ENCODE measurements at regions of chr15 and their contacts with region 1.

Region 1: DNA sequence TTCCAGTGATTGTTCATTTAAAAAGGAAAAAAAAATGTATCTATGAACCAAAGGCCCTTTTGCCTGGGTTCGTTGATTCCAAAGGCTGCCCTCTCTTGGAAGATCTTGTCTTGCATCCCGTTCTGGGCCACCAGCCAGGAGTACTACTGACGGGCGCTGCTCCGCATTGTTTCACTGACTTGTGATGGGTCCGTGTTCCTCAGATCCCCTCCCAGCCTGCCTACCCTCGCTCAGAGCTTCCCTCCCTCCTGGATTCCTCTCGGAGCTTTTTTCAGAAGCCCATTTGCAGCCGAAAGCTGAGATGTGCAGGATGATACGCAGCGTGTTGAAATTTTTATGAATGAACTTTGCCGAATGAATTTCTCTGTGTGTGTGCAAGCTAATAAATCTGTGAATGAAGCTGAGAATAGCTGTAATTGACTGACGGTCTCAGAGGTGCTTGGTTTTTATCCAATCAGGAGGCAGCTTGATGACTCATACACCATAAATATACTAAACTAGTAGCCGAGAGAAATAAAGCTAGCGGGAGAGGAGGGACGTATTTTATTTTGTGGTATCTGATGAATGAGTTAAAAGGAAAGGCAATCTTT is at the start of gene SHC4:
- DNase-seq: peak; percentile 46
- ATAC-seq: peak; percentile 59
- H3K4me3 Mint-ChIP-seq: peak within 1 kb of the TSS; percentile 81
- H3K27ac Mint-ChIP-seq: peak within 1 kb of the TSS; percentile 86
- H3K4me1 Mint-ChIP-seq: peaks cover 56% of the 10 kb centered on the region
- H3K27me3 Mint-ChIP-seq: peaks cover 12% of the 10 kb centered on the region
- total RNA-seq, gene SHC4: 3.0 to 9.8 TPM

Region 2: GRCh38 chr15:48730506-48730905 is 233.1 kb before region 1 on chr15:
- CTCF ChIA-PET with region 1: no interaction called
- DNase-seq: no peak
- ATAC-seq: no peak
- H3K4me3 Mint-ChIP-seq: no peak overlapping the region
- H3K27ac Mint-ChIP-seq: no peak overlapping the region
- H3K4me1 Mint-ChIP-seq: no peaks in the 10 kb centered on the region
- H3K27me3 Mint-ChIP-seq: no peaks in the 10 kb centered on the region

Region 3: GRCh38 chr15:48877630-48878595 is 85.7 kb before region 1 on chr15 and contains the start of gene EID1:
- CTCF ChIA-PET with region 1: interaction called, 16 read pairs
- DNase-seq: peak; percentile 97
- ATAC-seq: peak; percentile 93
- H3K4me3 Mint-ChIP-seq: peak within 1 kb of the TSS; percentile 93
- H3K27ac Mint-ChIP-seq: peak within 1 kb of the TSS; percentile 97
- H3K4me1 Mint-ChIP-seq: peaks cover 66% of the 10 kb centered on the region
- H3K27me3 Mint-ChIP-seq: peaks cover 8% of the 10 kb centered on the region
- total RNA-seq, gene EID1: 100 to 133 TPM

Measured in activated CD8-positive, alpha-beta memory T cell treated with anti-CD3 and anti-CD28 coated beads, Interleukin-2, amount 10 ng/mL, durations not matched to agents 7 days and 5 days (primary cell).